ENCODE measurements at regions of chr4 and their contacts with region 1.

Region 1: DNA sequence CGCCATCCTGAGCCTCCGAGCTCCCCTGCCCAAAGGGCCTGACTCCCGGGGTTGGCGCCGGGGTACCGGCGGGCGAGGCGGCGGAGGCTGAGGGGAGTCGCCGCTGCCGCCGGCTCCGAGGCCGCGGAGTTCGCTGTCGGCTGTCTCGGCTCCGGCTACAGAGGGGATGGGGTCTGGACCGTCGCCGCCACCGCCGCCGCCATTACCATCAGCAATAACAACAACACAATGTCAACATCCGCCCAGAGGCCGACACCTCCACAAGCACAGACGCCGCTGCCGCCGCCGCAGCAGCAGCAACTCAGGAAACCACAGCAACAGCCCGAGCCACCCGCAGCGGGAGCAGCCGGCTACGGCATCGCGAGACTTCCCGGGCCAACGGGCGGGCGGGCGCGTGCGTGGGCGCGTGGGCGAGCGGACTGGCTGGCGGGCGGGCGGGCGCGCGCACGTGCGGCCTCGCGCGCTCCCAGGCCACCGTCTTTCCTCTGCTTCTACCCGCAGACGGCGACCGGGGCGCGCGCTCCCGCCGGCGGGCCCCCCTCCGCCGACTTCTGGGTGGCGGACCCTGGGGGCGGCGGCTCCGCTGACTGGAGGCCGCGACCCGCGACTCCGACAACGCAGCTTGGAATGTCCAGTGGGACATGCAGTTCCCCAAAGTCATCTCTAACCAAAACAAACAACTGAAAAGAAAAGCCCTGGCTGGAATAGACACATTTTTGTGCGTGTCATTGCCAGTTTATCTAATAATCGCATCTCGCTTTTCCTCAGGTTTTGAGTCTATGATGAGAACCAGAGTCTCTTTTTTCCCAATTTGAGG is at the start of gene CHIC2:
- DNase-seq: peak; percentile 96
- H3K4me3 Mint-ChIP-seq: peak within 1 kb of the TSS; percentile 91
- H3K27ac Mint-ChIP-seq: peak within 1 kb of the TSS; percentile 94
- H3K4me1 Mint-ChIP-seq: peaks cover 46% of the 10 kb centered on the region
- H3K27me3 Mint-ChIP-seq: no peaks in the 10 kb centered on the region
- total RNA-seq, gene CHIC2: 19.1 and 20.3 TPM in 2 replicates

Region 2: DNA sequence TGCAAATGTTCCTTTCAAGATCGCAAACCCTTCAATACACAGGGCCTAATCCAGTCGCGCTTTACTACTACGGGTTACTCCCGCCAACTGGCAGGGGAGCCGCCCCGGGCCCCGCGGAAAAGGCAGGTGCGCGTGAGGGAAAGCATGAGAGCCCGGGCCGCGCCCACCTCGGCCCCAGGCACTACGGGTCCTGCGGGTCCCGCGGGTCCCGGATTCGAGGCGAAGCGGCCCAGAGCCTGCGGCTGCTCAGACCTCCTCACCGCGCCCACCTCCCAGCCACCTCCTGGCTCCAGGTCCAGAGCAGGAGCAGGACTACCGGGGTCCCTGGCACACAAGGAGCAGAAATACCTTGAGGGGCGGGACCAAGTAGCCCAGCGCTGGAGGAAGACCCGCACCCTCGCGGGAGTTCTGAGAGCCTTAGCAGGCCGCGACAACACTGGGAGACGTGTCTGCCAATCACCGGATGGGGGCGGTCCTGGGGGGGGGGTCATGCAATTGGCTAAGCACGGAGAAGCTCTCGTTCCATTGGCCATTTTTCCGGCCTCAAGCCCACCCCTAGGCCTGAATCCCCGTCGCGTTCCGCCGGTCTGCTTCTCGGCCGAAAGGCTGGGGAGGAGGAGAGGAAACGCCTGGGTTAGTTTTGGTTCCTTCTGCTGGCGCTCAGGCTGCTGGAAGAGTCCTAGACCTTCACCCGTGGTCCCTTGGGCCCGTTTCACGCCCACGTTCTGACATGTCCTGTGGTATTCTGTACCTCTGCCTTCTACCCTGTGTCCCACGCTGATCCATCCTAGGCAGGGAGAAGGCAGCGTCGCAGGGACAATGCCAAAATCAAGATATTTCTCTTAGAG is 1342.3 kb before region 1 on chr4:
- intact Hi-C with region 1: loop called (anchors 5 kb)
- DNase-seq: peak; percentile 84
- H3K4me3 Mint-ChIP-seq: peak overlapping the region; percentile 80
- H3K27ac Mint-ChIP-seq: peak overlapping the region; percentile 68
- H3K4me1 Mint-ChIP-seq: peaks cover 16% of the 10 kb centered on the region
- H3K27me3 Mint-ChIP-seq: peaks cover 10% of the 10 kb centered on the region

Region 3: GRCh38 chr4:53132132-53132896 is 932.2 kb before region 1 on chr4:
- intact Hi-C with region 1: loop called (anchors 1 kb)
- DNase-seq: no peak
- H3K4me3 Mint-ChIP-seq: no peak overlapping the region
- H3K27ac Mint-ChIP-seq: peak overlapping the region; percentile 79
- H3K4me1 Mint-ChIP-seq: peaks cover 31% of the 10 kb centered on the region
- H3K27me3 Mint-ChIP-seq: no peaks in the 10 kb centered on the region

Region 4: GRCh38 chr4:54005475-54005874 is 59.0 kb before region 1 on chr4:
- intact Hi-C with region 1: loop called (anchors 5 kb)
- DNase-seq: no peak
- H3K4me3 Mint-ChIP-seq: peak overlapping the region; percentile 57
- H3K27ac Mint-ChIP-seq: no peak overlapping the region
- H3K4me1 Mint-ChIP-seq: peaks cover 14% of the 10 kb centered on the region
- H3K27me3 Mint-ChIP-seq: no peaks in the 10 kb centered on the region

Region 5: GRCh38 chr4:54255876-54256275 is 191.4 kb after region 1 on chr4:
- intact Hi-C with region 1: no loop called
- DNase-seq: no peak
- H3K4me3 Mint-ChIP-seq: no peak overlapping the region
- H3K27ac Mint-ChIP-seq: no peak overlapping the region
- H3K4me1 Mint-ChIP-seq: no peaks in the 10 kb centered on the region
- H3K27me3 Mint-ChIP-seq: peaks cover 11% of the 10 kb centered on the region

Region 6: GRCh38 chr4:54547299-54548097 is 483.0 kb after region 1 on chr4:
- intact Hi-C with region 1: loop called (anchors 5 kb)
- DNase-seq: no peak
- H3K4me3 Mint-ChIP-seq: peak overlapping the region; percentile 20
- H3K27ac Mint-ChIP-seq: peak overlapping the region; percentile 90
- H3K4me1 Mint-ChIP-seq: peaks cover 9% of the 10 kb centered on the region
- H3K27me3 Mint-ChIP-seq: peaks cover 2% of the 10 kb centered on the region

Measured in activated T-helper 1 cell treated with anti-CD3 and anti-CD28 coated beads, Interleukin-12 subunit alpha, Interleukin-12 subunit beta, Interleukin-2, Interleukin-4 antibody, amounts not matched to agents 30 ng/mL and 10 ng/mL and 1 ng/mL, durations not matched to agents 14 hours and 24 hours and 36 hours (primary cell).